Endothelial cell of umbilical vein (primary cell): ENCODE measurements at regions of chr17 and their contacts with region 1.

Region 1: DNA sequence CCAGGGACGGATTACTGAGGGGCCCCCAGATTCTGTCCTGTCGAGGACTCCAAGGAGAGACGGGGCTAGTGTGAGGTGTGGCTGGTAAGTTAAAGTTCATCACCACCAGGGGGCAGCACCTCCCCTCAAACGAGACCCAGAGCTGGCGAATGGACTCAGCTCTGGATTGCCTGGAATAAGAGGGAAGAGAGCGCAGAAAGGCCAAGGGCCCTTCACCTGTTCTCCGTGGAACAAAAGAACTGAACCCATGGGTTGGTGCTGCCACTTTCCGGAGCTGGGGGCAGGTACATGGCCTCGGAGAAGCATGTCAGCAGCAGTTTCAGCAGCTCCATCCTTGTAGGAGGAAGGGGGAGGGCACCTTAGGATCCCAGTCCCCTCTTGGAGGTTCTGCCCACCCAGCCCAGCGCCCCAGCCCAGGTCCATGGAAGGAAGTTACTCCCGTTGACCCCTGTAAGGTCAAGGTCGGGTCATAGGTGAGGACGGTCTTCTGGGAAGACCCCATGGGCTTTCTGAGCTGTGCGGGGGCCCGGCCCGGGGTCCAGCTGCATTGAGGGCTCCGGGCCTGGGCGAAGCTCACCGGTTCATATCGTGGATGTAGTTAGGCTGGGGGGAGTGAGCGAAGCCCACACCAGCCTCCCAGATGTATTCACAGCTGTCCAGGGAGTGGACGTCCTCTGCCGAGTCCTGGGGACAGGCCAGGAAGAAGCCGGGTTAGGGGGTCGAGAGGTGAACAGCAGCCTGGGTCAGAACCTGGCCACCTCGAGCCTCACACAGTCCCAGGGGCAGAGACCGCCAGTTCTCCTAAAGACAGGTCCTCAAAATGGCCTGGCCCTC is 10.7 kb downstream of the HID1 start:
- DNase-seq: peak; percentile 83
- H3K4me3 ChIP-seq: no peak overlapping the region
- H3K27ac ChIP-seq: no peak overlapping the region
- H3K4me1 ChIP-seq: no peaks in the 10 kb centered on the region
- H3K27me3 ChIP-seq: no peaks in the 10 kb centered on the region
- CTCF ChIP-seq: peak; percentile 62 to 74
- POLR2A ChIP-seq: no peak

Region 2: DNA sequence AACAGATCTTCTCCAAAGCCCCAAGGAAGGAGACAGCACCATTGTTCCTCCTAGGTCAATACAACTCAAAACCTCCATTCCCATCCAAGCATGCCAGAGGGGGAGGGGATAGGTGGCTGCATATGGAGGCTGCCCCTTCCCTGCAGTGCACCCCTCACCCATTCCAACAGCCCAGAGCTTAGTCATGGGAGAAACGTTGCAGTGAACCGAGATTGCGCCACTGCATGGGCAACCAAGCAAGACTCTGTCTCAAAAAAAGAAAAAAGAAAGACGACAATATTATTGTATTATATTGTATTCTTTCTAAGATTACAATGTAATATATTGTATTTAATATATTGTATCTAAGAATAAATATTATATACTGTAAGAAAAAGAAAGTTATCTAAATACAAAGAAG is 302.0 kb before region 1 on chr17:
- CTCF ChIA-PET with region 1: interaction called, 13 read pairs
- POLR2A ChIA-PET with region 1: no interaction called
- dilution Hi-C with region 1: no loop called
- intact Hi-C with region 1: no loop called
- DNase-seq: no peak
- H3K4me3 ChIP-seq: no peak overlapping the region
- H3K27ac ChIP-seq: no peak overlapping the region
- H3K4me1 ChIP-seq: no peaks in the 10 kb centered on the region
- H3K27me3 ChIP-seq: no peaks in the 10 kb centered on the region
- CTCF ChIP-seq: no peak
- POLR2A ChIP-seq: no peak

Region 3: GRCh38 chr17:74883041-74883745 is 78.7 kb before region 1 on chr17:
- CTCF ChIA-PET with region 1: no interaction called
- POLR2A ChIA-PET with region 1: no interaction called
- dilution Hi-C with region 1: no loop called
- intact Hi-C with region 1: no loop called
- DNase-seq: no peak
- H3K4me3 ChIP-seq: no peak overlapping the region
- H3K27ac ChIP-seq: no peak overlapping the region
- H3K4me1 ChIP-seq: no peaks in the 10 kb centered on the region
- H3K27me3 ChIP-seq: no peaks in the 10 kb centered on the region
- CTCF ChIP-seq: no peak
- POLR2A ChIP-seq: no peak

Region 4: GRCh38 chr17:74923533-74924249 is 38.2 kb before region 1 on chr17:
- CTCF ChIA-PET with region 1: interaction called, 58 read pairs
- POLR2A ChIA-PET with region 1: no interaction called
- dilution Hi-C with region 1: no loop called
- intact Hi-C with region 1: loop called (anchors 1 kb)
- DNase-seq: peak; percentile 39
- H3K4me3 ChIP-seq: no peak overlapping the region
- H3K27ac ChIP-seq: no peak overlapping the region
- H3K4me1 ChIP-seq: peaks cover 4% of the 10 kb centered on the region
- H3K27me3 ChIP-seq: peaks cover 44 to 45% of the 10 kb centered on the region in 2 experiments
- CTCF ChIP-seq: peak; percentile 55 to 90
- POLR2A ChIP-seq: no peak

Region 5: DNA sequence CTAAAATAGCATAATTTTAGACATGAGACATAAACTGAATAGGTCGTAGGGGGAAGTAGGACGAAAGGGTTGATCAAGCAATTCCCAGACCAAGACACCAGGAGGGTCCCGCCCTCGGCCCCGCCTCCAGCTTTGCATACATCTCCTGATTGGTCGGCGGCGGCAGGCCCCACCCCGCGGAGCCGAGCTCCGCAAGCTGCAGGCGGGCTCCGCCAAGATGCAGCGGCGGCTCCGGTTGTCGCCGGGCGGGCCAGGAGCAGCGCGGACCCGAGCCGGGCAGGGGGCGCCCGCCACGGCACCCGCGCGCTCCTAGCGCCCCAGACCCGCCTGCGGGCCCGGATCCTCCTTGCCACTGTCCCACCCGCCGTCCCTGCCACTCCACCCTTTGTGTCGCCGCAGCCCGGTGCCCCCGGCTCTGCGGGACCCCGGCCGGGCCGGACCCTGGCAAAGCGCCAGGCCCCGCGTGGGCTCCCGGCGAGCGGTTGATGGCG is 25.6 kb after region 1 on chr17 and contains the start of gene CDR2L:
- CTCF ChIA-PET with region 1: interaction called, 21 read pairs
- POLR2A ChIA-PET with region 1: interaction called, 6 read pairs
- dilution Hi-C with region 1: no loop called
- intact Hi-C with region 1: no loop called
- DNase-seq: peak; percentile 95
- H3K4me3 ChIP-seq: peak within 1 kb of the TSS; percentile 47 to 89 (median 67)
- H3K27ac ChIP-seq: peak within 1 kb of the TSS; percentile 93
- H3K4me1 ChIP-seq: peaks cover 12% of the 10 kb centered on the region
- H3K27me3 ChIP-seq: no peaks in the 10 kb centered on the region
- CTCF ChIP-seq: no peak
- POLR2A ChIP-seq: peak; percentile 52
- total RNA-seq, gene CDR2L: 34.9 and 36.7 TPM in 2 replicates

Region 6: DNA sequence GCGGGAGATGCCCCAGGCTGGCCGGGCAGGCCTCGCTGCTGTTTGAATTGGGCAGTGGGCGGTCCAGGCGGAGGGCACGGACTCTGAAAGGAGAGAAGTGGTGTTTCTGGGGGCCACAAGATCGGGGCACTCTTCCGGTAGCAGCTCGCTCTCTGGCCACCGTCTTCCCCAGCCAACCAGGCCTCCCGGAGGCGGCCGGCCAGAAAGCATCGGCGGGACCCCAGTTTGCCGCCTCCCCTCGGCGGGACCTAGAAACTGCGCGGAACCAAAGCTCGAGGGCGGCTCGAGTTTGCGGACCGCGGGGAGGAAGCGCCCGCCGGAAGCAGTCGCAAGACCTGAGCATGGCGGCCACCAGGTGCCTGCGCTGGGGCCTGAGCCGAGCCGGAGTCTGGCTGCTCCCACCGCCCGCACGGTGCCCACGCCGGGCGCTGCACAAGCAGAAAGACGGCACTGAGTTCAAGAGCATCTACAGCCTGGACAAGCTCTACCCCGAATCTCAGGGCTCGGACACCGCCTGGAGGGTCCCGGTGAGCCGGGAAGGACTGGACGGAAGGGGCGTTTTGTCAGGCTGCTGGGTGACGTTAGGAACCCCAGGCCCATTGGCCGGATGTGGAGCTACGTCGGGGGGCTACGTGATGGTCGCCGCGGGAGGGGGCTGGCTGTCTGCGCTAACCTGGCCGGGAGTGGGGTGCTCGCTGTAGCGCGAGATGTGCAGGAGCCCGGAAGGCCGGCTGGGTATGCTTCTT is 50.6 kb after region 1 on chr17 and contains the start of gene MRPL58:
- CTCF ChIA-PET with region 1: interaction called, 134 read pairs
- POLR2A ChIA-PET with region 1: interaction called, 10 read pairs
- dilution Hi-C with region 1: no loop called
- intact Hi-C with region 1: loop called (anchors 1 kb)
- DNase-seq: peak; percentile 81
- H3K4me3 ChIP-seq: peak within 1 kb of the TSS; percentile 56 to 89 (median 83)
- H3K27ac ChIP-seq: peak within 1 kb of the TSS; percentile 67
- H3K4me1 ChIP-seq: peaks cover 16% of the 10 kb centered on the region
- H3K27me3 ChIP-seq: no peaks in the 10 kb centered on the region
- CTCF ChIP-seq: peak; percentile 40 to 76
- POLR2A ChIP-seq: peak; percentile 84
- total RNA-seq, gene MRPL58: 38.0 and 38.8 TPM in 2 replicates

Region 7: DNA sequence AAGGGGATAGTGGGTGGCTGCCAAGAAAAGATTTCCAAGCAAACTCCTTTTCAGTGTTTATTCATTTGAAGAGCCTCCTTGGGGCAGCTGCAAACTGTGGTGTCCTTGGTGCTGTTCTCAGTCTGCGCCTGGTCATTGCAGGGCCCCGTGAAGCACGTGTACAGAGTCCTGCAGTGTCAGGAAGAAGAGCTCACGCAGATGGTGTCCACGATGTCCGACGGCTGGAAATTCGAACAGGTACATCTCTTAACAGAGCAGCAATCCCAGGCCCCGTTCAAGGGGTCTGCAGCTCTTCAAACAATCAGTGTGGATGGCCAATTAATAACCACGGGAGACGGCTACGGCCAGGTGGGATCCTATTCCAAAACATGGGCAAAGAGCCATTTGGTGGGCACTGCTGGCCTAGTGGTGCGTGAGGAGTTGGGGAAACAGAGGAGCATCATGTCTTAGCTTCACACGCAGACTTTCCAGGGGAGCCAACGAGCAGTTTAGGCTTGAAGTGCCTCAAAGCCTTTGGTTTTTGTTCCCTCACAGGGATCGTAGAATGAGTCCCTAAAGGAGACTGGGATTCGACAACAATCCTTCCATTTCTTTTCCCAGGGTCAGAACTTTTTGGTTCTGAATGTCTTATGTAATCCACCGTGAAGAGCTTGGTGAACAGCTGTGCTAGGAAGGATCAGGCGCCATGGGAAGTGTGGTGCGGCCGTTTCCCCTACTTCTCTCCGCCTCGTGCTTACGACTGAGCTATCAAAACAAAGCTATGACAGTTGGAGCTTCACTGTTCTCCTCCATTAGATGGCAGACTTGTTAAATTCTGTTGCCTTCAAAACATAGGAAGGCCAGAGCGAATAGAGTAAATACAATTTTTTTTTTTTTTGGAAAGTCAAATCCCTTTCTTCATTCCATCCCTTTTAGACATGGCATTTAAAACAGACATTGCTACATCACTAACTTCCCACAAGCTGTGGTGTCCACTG is 97.8 kb after region 1 on chr17:
- CTCF ChIA-PET with region 1: interaction called, 25 read pairs
- POLR2A ChIA-PET with region 1: no interaction called
- dilution Hi-C with region 1: no loop called
- intact Hi-C with region 1: no loop called
- DNase-seq: peak; percentile 77
- H3K4me3 ChIP-seq: no peak overlapping the region
- H3K27ac ChIP-seq: no peak overlapping the region
- H3K4me1 ChIP-seq: no peaks in the 10 kb centered on the region
- H3K27me3 ChIP-seq: no peaks in the 10 kb centered on the region
- CTCF ChIP-seq: peak; percentile 21 to 39
- POLR2A ChIP-seq: no peak

Region 8: DNA sequence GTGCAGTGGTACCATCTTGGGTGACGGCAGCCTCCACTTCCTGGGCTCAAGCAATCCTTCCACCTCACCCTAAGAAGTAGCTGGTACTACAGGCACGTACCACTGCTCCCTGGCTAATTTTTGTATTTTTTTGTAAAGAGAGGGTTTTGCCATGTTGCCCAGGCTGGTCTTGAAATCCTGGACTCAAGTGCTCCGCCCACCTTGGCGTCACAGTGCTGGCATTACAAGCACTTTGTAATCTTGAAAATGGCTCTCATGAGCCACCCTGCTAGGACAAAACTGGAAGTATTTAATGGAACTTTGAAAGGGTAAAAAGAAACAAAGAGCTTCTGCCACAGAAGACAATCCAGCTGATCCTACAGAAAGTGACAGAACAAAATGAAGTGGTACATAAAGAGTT is 211.7 kb after region 1 on chr17:
- CTCF ChIA-PET with region 1: interaction called, 17 read pairs
- POLR2A ChIA-PET with region 1: no interaction called
- dilution Hi-C with region 1: no loop called
- intact Hi-C with region 1: no loop called
- DNase-seq: no peak
- H3K4me3 ChIP-seq: no peak overlapping the region
- H3K27ac ChIP-seq: no peak overlapping the region
- H3K4me1 ChIP-seq: no peaks in the 10 kb centered on the region
- H3K27me3 ChIP-seq: no peaks in the 10 kb centered on the region
- CTCF ChIP-seq: no peak
- POLR2A ChIP-seq: no peak

Region 9: DNA sequence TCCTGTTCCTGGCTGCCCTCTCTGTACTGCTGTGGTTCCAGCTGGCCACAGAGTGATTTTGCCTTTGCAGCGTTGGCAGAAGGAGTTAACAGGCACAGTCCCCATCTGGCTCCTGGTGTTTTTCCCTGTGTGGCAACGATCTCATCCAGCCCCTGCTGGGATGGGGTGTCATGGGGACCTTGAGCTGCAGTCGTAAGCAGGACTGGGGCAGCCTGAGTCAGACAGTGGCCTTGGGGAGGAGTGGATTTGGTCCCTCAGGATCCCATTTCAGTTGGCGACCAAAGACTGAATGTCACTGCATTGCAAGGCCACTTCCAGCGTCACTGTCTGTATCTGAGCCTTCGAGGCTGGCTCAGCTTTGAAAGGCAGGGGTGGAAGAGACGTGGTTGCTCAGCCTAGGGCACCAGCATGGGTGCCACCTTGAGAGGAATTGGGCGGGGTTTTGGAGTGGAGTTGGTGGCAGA is 506.4 kb after region 1 on chr17:
- CTCF ChIA-PET with region 1: no interaction called
- POLR2A ChIA-PET with region 1: no interaction called
- dilution Hi-C with region 1: no loop called
- intact Hi-C with region 1: no loop called
- DNase-seq: no peak
- H3K4me3 ChIP-seq: no peak overlapping the region
- H3K27ac ChIP-seq: no peak overlapping the region
- H3K4me1 ChIP-seq: no peaks in the 10 kb centered on the region
- H3K27me3 ChIP-seq: no peaks in the 10 kb centered on the region
- CTCF ChIP-seq: no peak
- POLR2A ChIP-seq: no peak